Caco-2 (cell line): ENCODE measurements at regions of chr3 and their contacts with region 1.

Region 1: DNA sequence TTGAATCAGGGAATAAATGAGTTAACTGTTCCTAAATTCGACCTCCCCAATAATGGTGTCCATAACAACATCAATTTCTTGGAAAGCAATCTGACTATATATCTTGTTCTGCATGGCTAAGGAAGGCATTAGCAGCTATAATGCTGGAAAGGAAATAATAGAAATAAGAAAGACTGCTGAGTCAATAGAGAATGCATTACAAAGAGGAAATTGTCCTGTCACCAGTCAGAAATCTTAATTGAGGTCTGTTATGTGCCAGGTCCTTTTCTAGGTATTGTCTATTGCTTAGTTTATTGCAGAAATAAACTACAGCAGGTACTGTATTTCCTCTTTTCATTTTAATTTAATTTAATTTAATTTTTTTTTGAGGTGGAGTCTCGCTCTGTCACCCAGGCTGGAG is 5.9 kb upstream of the PPP1R2 start:
- DNase-seq: no peak
- H3K4me3 ChIP-seq: no peak overlapping the region
- H3K4me3 Mint-ChIP-seq: peak overlapping the region; percentile 68
- H3K27ac Mint-ChIP-seq: peak overlapping the region; percentile 90
- H3K4me1 ChIP-seq: peaks cover 70% of the 10 kb centered on the region
- H3K4me1 Mint-ChIP-seq: peaks cover 72% of the 10 kb centered on the region
- H3K27me3 ChIP-seq: no peaks in the 10 kb centered on the region
- H3K27me3 Mint-ChIP-seq: no peaks in the 10 kb centered on the region
- CTCF ChIP-seq: no peak

Region 2: GRCh38 chr3:195583831-195584542 is 35.0 kb after region 1 on chr3 and contains the start of gene APOD:
- CTCF ChIA-PET with region 1: no interaction called
- POLR2A ChIA-PET with region 1: interaction called, 3 read pairs
- intact Hi-C with region 1: loop called (anchors 1 kb)
- DNase-seq: peak; percentile 55 to 76
- H3K4me3 ChIP-seq: no peak within 1 kb of the TSS
- H3K4me3 Mint-ChIP-seq: peak within 1 kb of the TSS; percentile 53
- H3K27ac Mint-ChIP-seq: peak within 1 kb of the TSS; percentile 56
- H3K4me1 ChIP-seq: peaks cover 56% of the 10 kb centered on the region
- H3K4me1 Mint-ChIP-seq: peaks cover 8% of the 10 kb centered on the region
- H3K27me3 ChIP-seq: no peaks in the 10 kb centered on the region
- H3K27me3 Mint-ChIP-seq: no peaks in the 10 kb centered on the region
- CTCF ChIP-seq: no peak
- total RNA-seq, gene APOD: 62.0 and 101 TPM in 2 replicates

Region 3: DNA sequence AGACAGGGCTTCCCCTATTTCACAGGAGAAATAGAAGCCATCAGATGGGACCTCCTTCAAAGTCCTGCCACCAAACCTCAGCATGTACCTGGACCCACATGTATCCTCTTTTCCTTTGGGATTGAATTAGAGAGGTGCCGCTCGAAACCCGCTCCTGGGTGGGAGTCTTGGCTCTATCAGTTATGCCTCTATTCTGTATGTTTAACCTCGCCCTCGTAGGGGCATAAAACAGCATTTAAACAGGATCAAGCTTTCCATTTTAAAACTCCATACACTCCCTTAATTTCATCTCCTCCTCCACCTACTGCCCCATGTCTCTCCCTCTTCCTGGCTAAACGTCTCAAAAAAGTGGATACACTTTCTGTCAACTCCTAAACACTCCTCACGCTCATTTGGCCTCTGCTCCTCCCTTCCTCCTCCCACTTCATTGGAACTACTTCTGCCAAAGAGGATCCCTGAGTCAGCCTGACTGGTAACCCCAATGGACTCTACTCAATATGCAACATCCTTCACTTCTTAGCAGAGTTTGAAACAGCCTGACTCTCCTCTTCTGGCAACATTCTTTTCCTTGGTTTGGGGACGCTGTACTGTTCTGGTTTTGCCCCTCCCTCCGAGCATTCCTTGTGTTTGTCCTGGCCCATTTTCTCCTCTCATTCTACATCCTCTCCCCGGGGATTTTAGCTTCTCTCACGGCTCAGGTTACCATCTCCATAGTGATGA is 148.8 kb after region 1 on chr3:
- CTCF ChIA-PET with region 1: no interaction called
- POLR2A ChIA-PET with region 1: no interaction called
- intact Hi-C with region 1: no loop called
- DNase-seq: no peak
- H3K4me3 ChIP-seq: no peak overlapping the region
- H3K4me3 Mint-ChIP-seq: no peak overlapping the region
- H3K27ac Mint-ChIP-seq: no peak overlapping the region
- H3K4me1 ChIP-seq: peaks cover 7% of the 10 kb centered on the region; the same call in 1 of the 2 replicates
- H3K4me1 Mint-ChIP-seq: peaks cover 13% of the 10 kb centered on the region
- H3K27me3 ChIP-seq: no peaks in the 10 kb centered on the region
- H3K27me3 Mint-ChIP-seq: no peaks in the 10 kb centered on the region
- CTCF ChIP-seq: no peak

Region 4: DNA sequence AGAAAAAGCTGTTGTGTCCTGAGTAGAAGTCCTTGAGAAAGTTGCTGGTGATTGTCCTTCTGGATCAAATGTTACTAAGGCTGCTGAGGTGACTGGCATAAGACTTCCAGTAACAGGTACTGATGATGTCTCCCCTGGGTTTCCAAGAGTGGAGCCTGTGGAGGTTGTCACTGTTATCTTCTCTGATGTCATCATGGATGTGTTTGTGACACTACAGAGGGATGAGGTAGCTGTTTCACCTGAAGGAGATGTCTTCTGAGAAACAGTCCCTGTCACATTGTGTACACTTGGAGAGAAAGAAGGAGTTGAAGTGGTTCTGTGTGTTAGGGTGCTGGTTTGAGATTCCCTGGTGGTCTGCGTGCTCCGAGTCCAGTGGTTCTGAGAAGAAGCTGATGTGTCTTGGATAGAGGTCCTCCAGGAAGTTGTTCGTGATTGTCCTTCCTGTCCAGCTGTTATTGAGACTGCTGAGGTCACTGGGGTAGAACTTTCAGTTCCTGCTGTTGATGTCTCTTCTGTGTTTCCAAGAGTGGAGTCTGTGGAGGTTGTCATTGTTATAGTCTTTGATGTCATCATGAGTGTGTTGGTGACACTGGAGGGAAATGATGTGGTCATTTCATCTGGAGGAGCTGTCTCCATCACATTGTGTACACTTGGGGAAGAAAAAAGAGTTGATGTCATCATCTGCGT is 241.8 kb after region 1 on chr3:
- CTCF ChIA-PET with region 1: no interaction called
- POLR2A ChIA-PET with region 1: no interaction called
- intact Hi-C with region 1: no loop called
- DNase-seq: no peak
- H3K4me3 ChIP-seq: no peak overlapping the region
- H3K4me3 Mint-ChIP-seq: no peak overlapping the region
- H3K27ac Mint-ChIP-seq: no peak overlapping the region
- H3K4me1 ChIP-seq: no peaks in the 10 kb centered on the region
- H3K4me1 Mint-ChIP-seq: no peaks in the 10 kb centered on the region
- H3K27me3 ChIP-seq: no peaks in the 10 kb centered on the region
- H3K27me3 Mint-ChIP-seq: peaks cover 13% of the 10 kb centered on the region
- CTCF ChIP-seq: no peak